Endothelial cell of umbilical vein (primary cell): ENCODE measurements at regions of chr7 and their contacts with region 1.

Region 1: DNA sequence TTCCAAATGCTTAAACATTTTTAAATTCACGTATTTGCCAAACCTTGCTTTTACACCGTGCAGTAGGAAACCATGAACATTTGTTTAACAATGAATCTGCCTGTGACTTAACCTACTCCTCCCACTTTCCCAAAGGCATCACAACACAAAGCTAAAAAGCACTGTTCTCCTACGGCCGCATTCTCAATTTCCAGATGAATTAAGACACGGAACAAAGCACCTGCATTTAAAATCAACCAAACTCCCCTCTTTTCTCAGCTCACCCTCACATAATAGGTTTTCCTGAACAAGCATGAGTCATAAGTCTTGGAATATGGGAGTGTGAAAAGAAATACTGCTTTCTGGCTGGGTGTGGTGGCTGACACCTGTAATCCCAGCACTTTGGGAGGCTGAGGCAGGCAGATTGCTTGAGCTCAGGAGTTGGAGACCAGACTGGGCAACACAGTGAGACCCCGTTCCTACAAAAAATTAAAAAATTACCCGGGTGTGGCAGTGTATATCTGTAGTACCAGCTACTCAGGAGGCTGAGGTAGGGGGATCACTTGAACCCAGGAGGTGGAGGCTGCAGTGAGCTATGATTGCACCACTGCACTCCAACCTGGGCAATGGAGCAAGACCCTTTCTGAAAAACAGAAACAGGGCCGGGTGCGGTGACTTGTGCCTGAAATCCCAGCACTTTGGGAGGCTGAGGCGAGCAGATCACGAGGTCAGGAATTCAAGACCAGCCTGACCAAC is 51.7 kb upstream of the CYTH3 start:
- DNase-seq: peak; percentile 6
- H3K4me3 ChIP-seq: no peak overlapping the region
- H3K27ac ChIP-seq: no peak overlapping the region
- H3K4me1 ChIP-seq: no peaks in the 10 kb centered on the region
- H3K27me3 ChIP-seq: no peaks in the 10 kb centered on the region
- CTCF ChIP-seq: no peak
- POLR2A ChIP-seq: no peak

Region 2: DNA sequence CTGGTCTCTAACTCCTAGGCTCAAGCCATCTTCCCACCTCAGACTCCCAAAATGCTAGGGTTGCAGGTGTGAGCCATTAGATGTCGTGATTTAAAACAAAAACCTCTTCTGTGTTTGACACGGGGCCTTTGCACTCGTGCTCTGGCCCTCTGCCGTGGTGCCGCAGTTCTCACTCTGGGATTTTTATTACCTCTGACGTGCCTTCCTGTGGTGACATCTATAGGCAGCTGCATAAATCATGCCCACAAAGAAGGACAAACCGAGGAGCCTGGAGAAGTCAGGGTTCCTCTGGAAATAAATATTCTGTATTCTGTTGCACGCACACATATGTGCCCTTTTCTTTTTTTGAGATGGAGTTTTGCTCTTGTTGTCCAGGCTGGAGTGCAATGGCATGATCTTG is 469.4 kb before region 1 on chr7:
- CTCF ChIA-PET with region 1: interaction called, 19 read pairs
- POLR2A ChIA-PET with region 1: no interaction called
- dilution Hi-C with region 1: no loop called
- intact Hi-C with region 1: loop called (anchors 1 kb)
- DNase-seq: no peak
- H3K4me3 ChIP-seq: no peak overlapping the region
- H3K27ac ChIP-seq: no peak overlapping the region
- H3K4me1 ChIP-seq: no peaks in the 10 kb centered on the region
- H3K27me3 ChIP-seq: no peaks in the 10 kb centered on the region
- CTCF ChIP-seq: no peak
- POLR2A ChIP-seq: no peak

Region 3: DNA sequence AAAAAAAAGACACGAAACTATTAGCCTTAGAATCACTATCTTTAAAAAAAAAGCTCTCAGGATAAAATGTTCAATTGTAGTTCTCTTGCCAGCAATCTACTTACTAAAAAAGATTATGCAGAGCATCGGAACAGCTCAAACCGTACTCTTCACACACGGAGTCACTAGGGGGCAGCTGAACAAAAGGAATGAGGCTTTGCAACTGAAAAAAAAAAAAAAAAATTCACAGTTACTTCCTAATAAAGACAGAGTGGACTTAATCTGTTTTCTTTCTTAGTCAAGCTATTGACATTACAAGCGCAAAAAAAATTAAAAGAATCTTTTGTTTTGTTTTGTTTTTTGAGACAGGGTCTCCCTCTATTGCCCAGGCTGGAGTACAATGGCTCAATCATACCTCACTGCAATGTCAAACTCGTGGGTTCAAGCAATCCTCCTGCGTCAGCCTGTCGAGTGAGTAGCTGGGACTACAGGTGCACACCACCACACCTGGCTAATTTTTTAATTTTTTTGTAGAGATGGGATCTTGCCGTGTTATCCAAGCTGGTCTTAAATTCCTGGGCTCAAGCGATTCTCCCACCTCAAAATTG is 326.8 kb before region 1 on chr7:
- CTCF ChIA-PET with region 1: interaction called, 26 read pairs
- POLR2A ChIA-PET with region 1: no interaction called
- dilution Hi-C with region 1: no loop called
- intact Hi-C with region 1: loop called (anchors 2 kb)
- DNase-seq: peak; percentile 74
- H3K4me3 ChIP-seq: no peak overlapping the region
- H3K27ac ChIP-seq: no peak overlapping the region
- H3K4me1 ChIP-seq: no peaks in the 10 kb centered on the region
- H3K27me3 ChIP-seq: no peaks in the 10 kb centered on the region
- CTCF ChIP-seq: peak; percentile 30 to 53
- POLR2A ChIP-seq: no peak

Region 4: DNA sequence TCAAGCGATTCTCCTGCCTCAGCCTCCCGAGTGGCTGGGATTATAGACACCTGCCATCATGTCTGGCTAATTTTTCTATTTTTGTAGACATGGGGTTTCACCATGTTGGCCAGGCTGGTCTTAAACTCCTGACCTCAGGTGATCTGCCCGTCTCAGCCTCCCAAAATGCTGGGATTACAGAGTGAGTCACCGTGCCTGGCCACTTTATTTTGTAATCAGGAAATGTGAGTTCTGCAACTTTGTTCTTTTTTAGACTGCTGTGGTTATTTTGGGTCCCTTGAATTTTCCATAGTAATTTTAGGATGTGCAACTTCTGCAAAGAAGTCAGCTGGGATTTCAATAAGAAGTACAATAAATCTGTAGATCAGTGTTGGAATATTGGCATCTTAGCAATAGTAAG is 148.5 kb before region 1 on chr7:
- CTCF ChIA-PET with region 1: interaction called, 3 read pairs
- POLR2A ChIA-PET with region 1: no interaction called
- dilution Hi-C with region 1: no loop called
- intact Hi-C with region 1: loop called (anchors 5 kb)
- DNase-seq: no peak
- H3K4me3 ChIP-seq: no peak overlapping the region
- H3K27ac ChIP-seq: no peak overlapping the region
- H3K4me1 ChIP-seq: peaks cover 4% of the 10 kb centered on the region
- H3K27me3 ChIP-seq: no peaks in the 10 kb centered on the region
- CTCF ChIP-seq: no peak
- POLR2A ChIP-seq: no peak

Region 5: GRCh38 chr7:6250364-6250833 is 73.7 kb before region 1 on chr7:
- CTCF ChIA-PET with region 1: interaction called, 3 read pairs
- POLR2A ChIA-PET with region 1: no interaction called
- dilution Hi-C with region 1: no loop called
- intact Hi-C with region 1: loop called (anchors 5 kb)
- DNase-seq: no peak
- H3K4me3 ChIP-seq: no peak overlapping the region
- H3K27ac ChIP-seq: no peak overlapping the region
- H3K4me1 ChIP-seq: peaks cover 18% of the 10 kb centered on the region
- H3K27me3 ChIP-seq: no peaks in the 10 kb centered on the region
- CTCF ChIP-seq: no peak
- POLR2A ChIP-seq: no peak

Region 6: DNA sequence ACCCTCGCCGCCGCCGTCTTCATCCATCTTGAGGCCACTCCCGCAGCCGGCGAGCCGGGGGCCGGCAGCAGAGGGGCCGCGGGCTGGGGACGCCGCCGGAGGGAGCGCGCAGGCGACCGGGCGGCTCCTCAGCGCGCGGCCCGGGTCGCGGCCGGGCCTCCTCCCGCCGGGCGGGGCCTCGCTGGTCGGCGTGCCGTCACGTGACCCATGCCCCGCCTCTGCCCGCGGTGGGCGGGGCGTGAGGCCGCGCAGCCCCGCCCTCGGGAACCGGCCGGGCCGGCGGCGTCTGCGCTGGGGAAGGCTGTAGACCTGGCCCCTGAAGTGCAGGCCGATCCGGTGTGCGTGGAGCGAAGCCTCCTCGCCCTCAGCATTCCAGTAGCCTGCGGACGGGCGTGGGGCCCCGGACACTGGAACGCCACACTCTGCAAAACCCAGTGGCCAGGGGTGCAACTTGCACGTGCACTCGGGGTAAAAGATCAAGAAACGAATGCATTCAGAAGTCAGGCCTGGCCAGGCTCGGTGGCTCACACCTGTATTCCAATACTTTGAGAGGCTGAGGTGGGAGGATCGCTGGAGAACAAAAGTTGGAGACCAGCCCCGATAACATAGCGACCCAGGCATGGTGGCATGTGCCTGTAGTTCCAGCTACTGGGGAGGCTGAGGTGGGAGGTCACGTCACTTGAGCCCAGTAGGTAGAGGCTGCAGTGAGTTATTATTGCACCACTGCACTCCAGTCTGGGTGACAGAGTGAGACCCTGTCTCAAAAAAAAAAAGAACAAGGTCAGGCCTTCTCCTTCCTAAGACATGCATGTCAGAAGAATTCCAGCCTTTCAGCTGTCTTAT is 51.4 kb before region 1 on chr7 and contains the start of gene CYTH3:
- CTCF ChIA-PET with region 1: no interaction called
- POLR2A ChIA-PET with region 1: interaction called, 3 read pairs
- dilution Hi-C with region 1: no loop called
- intact Hi-C with region 1: loop called (anchors 5 kb)
- DNase-seq: peak; percentile 79
- H3K4me3 ChIP-seq: peak within 1 kb of the TSS; percentile 66 to 87 (median 69)
- H3K27ac ChIP-seq: no peak within 1 kb of the TSS
- H3K4me1 ChIP-seq: peaks cover 9% of the 10 kb centered on the region
- H3K27me3 ChIP-seq: peaks cover 3% of the 10 kb centered on the region in 2 experiments
- CTCF ChIP-seq: no peak
- POLR2A ChIP-seq: peak; percentile 77
- total RNA-seq, gene CYTH3: 11.1 and 11.2 TPM in 2 replicates

Region 7: GRCh38 chr7:6435486-6436384 is 111.6 kb after region 1 on chr7:
- CTCF ChIA-PET with region 1: no interaction called
- POLR2A ChIA-PET with region 1: no interaction called
- dilution Hi-C with region 1: no loop called
- intact Hi-C with region 1: loop called (anchors 1 kb)
- DNase-seq: peak; percentile 84
- H3K4me3 ChIP-seq: no peak overlapping the region
- H3K27ac ChIP-seq: no peak overlapping the region
- H3K4me1 ChIP-seq: peaks cover 11% of the 10 kb centered on the region
- H3K27me3 ChIP-seq: no peaks in the 10 kb centered on the region
- CTCF ChIP-seq: peak; percentile 93 to 95
- POLR2A ChIP-seq: no peak